GM10248 (cell line): ENCODE measurements at regions of chr2 and their contacts with region 1.

Region 1: GRCh38 chr2:160994141-160995002 is 165.9 kb upstream of the TANK start:
- DNase-seq: peak; percentile 46
- CTCF ChIP-seq: peak; percentile 81

Region 2: DNA sequence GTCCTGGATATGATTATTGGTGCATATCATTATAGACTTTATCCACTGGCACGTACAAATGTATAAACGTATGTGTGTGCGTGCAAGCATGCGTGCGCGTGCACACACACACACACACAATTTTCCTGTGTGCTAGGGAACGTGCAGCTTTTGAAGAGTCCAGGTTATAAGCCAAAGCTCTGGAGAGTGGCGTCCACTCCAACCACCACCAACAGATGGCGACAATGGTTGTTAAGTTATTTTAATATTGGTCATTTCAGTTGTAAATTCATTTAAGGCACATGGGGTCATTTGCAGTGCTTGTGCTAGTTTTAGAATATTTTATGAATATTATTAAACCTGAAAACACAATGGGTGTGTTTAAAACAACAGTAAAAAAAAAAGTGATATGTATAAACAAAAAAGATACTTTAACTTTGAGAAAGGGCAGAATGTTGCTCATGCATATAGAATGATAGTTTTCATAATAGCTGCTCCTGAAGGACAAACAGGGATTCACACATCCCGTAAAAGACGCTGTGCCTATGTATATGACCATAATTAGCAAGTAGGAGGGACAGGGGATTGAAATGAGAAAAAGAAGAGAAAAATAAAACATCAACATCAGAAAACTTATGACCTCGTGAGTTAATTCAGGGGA is 670.1 kb before region 1 on chr2:
- CTCF ChIA-PET with region 1: interaction called, 29 read pairs
- POLR2A ChIA-PET with region 1: no interaction called
- DNase-seq: peak; percentile 29
- CTCF ChIP-seq: peak; percentile 60

Region 3: DNA sequence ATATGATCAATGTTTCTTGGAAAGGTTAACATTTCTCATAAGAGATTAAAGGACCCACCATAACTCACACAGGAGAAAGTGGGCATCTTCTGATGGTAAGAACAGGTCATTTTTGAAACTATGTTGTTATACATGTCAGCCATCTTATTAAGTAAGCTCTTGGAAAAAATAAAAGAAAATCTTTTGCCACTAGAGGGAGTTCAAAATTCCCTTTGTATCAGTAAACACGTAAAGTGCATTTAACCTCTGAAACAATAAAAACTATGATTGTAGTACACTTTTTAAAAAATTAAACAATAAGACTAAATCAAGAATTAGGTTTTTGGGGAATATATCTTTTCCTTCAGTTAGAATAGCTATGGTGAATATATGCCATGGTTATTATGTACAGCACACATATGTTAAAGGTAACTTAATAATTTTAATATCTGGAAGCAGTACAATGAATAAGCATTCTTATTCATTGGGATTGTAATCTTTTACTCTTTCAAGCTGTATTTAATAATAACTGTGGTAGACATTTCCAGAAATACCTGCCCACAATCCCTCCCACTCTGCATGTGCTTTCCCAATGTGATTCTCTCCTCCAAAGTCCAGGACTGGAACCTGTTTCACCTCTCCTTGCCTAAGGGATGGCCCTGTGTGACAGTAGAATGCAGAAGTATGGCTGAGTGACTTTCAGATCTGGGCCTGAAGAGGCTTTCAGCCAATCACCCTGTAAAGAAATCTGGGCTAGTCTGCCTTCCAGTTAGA is 564.9 kb before region 1 on chr2:
- CTCF ChIA-PET with region 1: interaction called, 10 read pairs
- POLR2A ChIA-PET with region 1: no interaction called
- DNase-seq: peak; percentile 18
- CTCF ChIP-seq: peak; percentile 23

Region 4: DNA sequence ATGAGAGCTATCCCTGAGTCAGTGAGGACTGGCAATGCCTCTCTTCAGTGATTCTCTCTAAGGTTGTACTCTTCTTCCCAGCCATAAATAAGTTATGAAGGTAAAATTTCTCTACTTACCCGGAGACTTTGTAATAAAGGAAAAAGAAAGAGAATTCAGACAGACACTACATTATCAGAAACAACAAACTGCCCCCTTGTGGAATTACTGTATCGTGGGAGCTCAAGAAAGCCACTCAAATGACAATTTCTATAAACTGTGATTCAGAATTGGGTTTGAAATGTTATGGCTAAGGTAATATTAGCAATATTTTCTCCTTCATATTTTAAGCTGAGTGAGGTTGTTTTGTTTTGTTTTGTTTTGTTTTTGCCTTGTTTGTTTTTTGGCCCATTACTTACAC is 10.0 kb after region 1 on chr2:
- CTCF ChIA-PET with region 1: interaction called, 39 read pairs
- POLR2A ChIA-PET with region 1: no interaction called
- DNase-seq: no peak
- CTCF ChIP-seq: no peak